ENCODE measurements at regions of chr16 and their contacts with region 1.

Region 1: GRCh38 chr16:53099318-53100130 is 44.7 kb downstream of the CHD9 start:
- DNase-seq: peak; percentile 86 to 95
- ATAC-seq: peak; percentile 92 to 94
- H3K4me3 ChIP-seq: peak overlapping the region; percentile 31
- H3K27ac ChIP-seq: peak overlapping the region; percentile 95 to 96
- H3K4me1 ChIP-seq: peaks cover 49% of the 10 kb centered on the region
- CTCF ChIP-seq: no peak
- EP300 ChIP-seq: peak; percentile 46 to 65; a peak in 2 of 5 replicates
- POLR2A ChIP-seq: no peak
- RAD21 ChIP-seq: peak in 1 of 2 experiments; percentile 45; a peak in 2 of 5 replicates

Region 2: GRCh38 chr16:53080345-53081031 is 19.0 kb before region 1 on chr16:
- CTCF ChIA-PET with region 1: interaction called, 15 read pairs
- POLR2A ChIA-PET with region 1: interaction called, 54 read pairs
- DNase-seq: peak; percentile 89 to 92
- ATAC-seq: peak; percentile 95 to 96
- H3K4me3 ChIP-seq: peak overlapping the region; percentile 3; the same call in 2 of the 3 replicates
- H3K27ac ChIP-seq: peak overlapping the region; percentile 75 to 87
- H3K4me1 ChIP-seq: peaks cover 75% of the 10 kb centered on the region
- CTCF ChIP-seq: no peak
- EP300 ChIP-seq: peak; percentile 58 to 70; a peak in 3 of 5 replicates
- POLR2A ChIP-seq: no peak
- RAD21 ChIP-seq: peak in 1 of 2 experiments; percentile 39; a peak in 3 of 5 replicates

Region 3: DNA sequence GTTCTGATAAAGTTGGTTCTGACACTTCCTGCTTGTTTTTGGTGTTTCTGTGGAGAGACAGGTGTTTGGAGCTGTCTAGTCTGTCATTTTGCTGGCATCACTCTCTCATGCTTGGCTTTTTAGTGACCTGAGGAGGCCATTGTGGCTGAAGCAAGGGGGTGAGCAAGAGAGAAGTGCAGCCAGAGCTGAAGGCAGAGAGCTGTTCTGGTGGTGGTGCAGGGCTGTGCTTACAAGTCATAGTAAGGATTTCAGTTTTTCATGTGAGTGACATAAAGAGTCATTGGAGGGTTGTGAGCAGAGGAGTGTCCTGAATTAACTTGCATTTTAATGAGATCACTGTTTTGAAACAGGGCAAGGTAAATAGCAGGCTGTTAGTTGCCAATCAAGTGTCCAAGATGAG is 52.8 kb after region 1 on chr16:
- CTCF ChIA-PET with region 1: no interaction called
- POLR2A ChIA-PET with region 1: no interaction called
- DNase-seq: no peak
- ATAC-seq: no peak
- H3K4me3 ChIP-seq: no peak overlapping the region
- H3K27ac ChIP-seq: no peak overlapping the region
- H3K4me1 ChIP-seq: peaks cover 8% of the 10 kb centered on the region; the same call in 2 of the 3 replicates
- CTCF ChIP-seq: no peak
- EP300 ChIP-seq: no peak
- POLR2A ChIP-seq: no peak
- RAD21 ChIP-seq: no peak

Measured in A549 (cell line).